Activated T-helper 2 cell treated with anti-CD3 and anti-CD28 coated beads, Interferon-gamma antibody, Interleukin-2, Interleukin-4, amounts not matched to agents 10 μg/mL and 5 μg/mL and 100 μg/mL, durations not matched to agents 14 hours and 24 hours and 36 hours (primary cell): ENCODE measurements at regions of chr6 and their contacts with region 1.

Region 1: GRCh38 chr6:157099912-157100593 is 223.3 kb downstream of the TMEM242 start:
- DNase-seq: peak; percentile 57
- H3K4me3 Mint-ChIP-seq: peak overlapping the region; percentile 28
- H3K27ac Mint-ChIP-seq: peak overlapping the region; percentile 78
- H3K4me1 Mint-ChIP-seq: peaks cover 47% of the 10 kb centered on the region
- H3K27me3 Mint-ChIP-seq: no peaks in the 10 kb centered on the region

Region 2: GRCh38 chr6:156976216-156977127 is 123.6 kb before region 1 on chr6:
- intact Hi-C with region 1: loop called (anchors 5 kb)
- DNase-seq: no peak
- H3K4me3 Mint-ChIP-seq: peak overlapping the region; percentile 74
- H3K27ac Mint-ChIP-seq: peak overlapping the region; percentile 83
- H3K4me1 Mint-ChIP-seq: peaks cover 50% of the 10 kb centered on the region
- H3K27me3 Mint-ChIP-seq: no peaks in the 10 kb centered on the region

Region 3: GRCh38 chr6:157068691-157069324 is 31.2 kb before region 1 on chr6:
- intact Hi-C with region 1: loop called (anchors 2 kb)
- DNase-seq: no peak
- H3K4me3 Mint-ChIP-seq: no peak overlapping the region
- H3K27ac Mint-ChIP-seq: peak overlapping the region; percentile 58
- H3K4me1 Mint-ChIP-seq: peaks cover 54% of the 10 kb centered on the region
- H3K27me3 Mint-ChIP-seq: no peaks in the 10 kb centered on the region

Region 4: DNA sequence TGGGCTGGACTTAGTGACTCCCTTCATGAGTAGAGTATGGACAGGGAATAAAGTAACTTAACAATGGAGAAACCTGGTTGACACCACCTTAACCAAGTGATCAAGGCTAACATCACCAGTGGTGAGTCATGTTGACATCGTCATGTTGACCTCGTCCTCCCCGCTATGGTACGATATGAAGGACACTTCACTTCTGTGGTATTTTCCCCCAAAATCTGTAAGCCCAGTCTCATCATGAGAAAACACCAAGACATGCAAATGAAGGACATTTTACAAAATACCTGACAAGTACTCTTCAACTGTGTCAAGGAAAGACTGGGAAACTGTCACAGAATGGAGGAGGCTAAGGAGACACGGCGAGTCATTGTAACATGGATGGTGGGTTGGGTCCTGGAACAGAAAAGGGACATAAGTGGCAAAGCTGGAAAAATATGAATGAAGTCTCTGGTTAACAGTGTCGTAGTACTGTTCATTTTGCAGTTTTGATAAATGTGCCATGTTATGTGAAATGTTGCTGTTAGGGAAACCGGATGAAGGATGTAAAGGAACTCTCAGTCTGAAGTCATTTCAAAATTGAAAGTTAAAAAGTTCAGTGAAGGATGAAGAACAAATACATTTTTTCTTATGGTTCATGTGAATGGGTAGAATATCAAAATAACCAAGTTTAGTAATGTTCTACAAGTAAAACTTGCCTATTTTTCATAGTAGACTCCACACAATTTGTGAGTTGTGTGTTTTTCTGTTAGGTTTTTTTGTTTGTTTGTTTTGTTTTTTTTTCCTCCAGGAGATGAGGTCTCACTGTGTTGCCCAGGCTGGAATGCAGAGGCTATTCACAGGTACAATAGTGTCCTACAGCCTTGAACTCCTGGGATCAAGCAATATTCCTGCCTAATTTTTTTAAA is 24.3 kb before region 1 on chr6:
- intact Hi-C with region 1: loop called (anchors 1 kb)
- DNase-seq: no peak
- H3K4me3 Mint-ChIP-seq: peak overlapping the region; percentile 43
- H3K27ac Mint-ChIP-seq: peak overlapping the region; percentile 90
- H3K4me1 Mint-ChIP-seq: peaks cover 46% of the 10 kb centered on the region
- H3K27me3 Mint-ChIP-seq: no peaks in the 10 kb centered on the region

Region 5: GRCh38 chr6:157151989-157152388 is 51.9 kb after region 1 on chr6:
- intact Hi-C with region 1: loop called (anchors 2 kb)
- DNase-seq: no peak
- H3K4me3 Mint-ChIP-seq: no peak overlapping the region
- H3K27ac Mint-ChIP-seq: peak overlapping the region; percentile 55
- H3K4me1 Mint-ChIP-seq: peaks cover 22% of the 10 kb centered on the region
- H3K27me3 Mint-ChIP-seq: no peaks in the 10 kb centered on the region